Right cardiac atrium (tissue), 5 donors: ENCODE measurements at regions of chr1 and their contacts with region 1.

Region 1: GRCh38 chr1:11805447-11806306 is at the starts of genes CLCN6 and MTHFR:
- DNase-seq: peak; percentile 100
- ATAC-seq: peak; percentile 90 to 92
- H3K4me3 ChIP-seq: peak within 1 kb of the TSS; percentile 80
- H3K27ac ChIP-seq: peak within 1 kb of the TSS; percentile 94
- H3K4me1 ChIP-seq: peaks cover 7% of the 10 kb centered on the region
- H3K27me3 ChIP-seq: no peaks in the 10 kb centered on the region
- total RNA-seq, gene CLCN6: 30.4 to 54.9 (median 36.8) TPM
- total RNA-seq, gene MTHFR: 46.6 to 75.2 (median 58.9) TPM

Region 2: GRCh38 chr1:11725616-11726015 is 80.1 kb before region 1 on chr1:
- intact Hi-C with region 1: no loop called
- DNase-seq: no peak
- ATAC-seq: no peak
- H3K4me3 ChIP-seq: no peak overlapping the region
- H3K27ac ChIP-seq: no peak overlapping the region
- H3K4me1 ChIP-seq: no peaks in the 10 kb centered on the region
- H3K27me3 ChIP-seq: no peaks in the 10 kb centered on the region

Region 3: GRCh38 chr1:11735854-11736745 is 69.6 kb before region 1 on chr1 and contains the start of gene AGTRAP:
- intact Hi-C with region 1: loop called in 1 of 4 experiments (anchors 2 kb)
- DNase-seq: peak; percentile 98 to 100 (median 99)
- ATAC-seq: peak; percentile 92
- H3K4me3 ChIP-seq: peak within 1 kb of the TSS; percentile 67
- H3K27ac ChIP-seq: peak within 1 kb of the TSS; percentile 78
- H3K4me1 ChIP-seq: peaks cover 4% of the 10 kb centered on the region
- H3K27me3 ChIP-seq: no peaks in the 10 kb centered on the region
- total RNA-seq, gene AGTRAP: 17.5 to 25.0 (median 21.9) TPM

Region 4: DNA sequence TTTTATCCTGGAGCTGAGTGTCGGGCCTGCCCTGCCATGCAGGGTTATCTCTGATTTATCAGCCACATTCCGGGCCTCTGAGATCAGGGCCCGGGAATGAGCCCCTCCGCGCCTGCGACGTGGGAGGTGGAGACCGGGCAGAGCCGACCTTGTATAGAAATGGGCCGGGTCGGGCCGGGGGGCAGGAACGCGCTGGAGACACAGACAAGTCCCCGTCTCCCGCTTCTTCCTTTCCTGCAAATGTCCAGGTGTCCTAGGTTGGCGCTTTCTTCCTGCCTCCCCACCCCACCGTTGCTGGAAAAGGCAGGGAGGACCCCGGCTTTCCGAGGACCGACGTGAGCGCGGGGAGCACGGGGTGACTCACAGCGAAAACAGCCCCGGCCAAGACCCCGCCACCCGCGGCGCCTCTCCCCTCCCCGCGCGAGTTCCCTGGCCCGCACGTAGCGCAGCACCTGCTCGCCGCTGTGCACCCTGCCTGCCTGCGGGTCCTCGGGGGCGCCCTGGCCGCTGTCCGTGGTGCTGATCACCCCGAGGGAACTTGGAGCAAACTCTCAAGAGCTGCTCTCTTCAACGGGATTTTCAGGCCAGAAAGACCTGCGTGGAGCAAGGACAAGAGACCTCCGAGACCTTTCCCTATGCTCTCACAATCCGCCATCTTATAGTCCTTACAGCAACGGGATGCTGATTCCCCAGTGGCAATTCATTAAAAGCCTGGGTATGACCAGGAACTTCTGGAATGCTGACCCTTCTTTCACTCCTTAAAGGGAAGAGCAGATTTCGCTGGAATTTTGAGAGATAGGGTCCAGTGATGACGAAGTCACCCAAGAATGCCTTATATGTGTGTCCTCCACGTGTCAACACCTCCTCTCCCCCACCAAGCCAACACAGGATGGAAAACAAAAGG is 53.5 kb after region 1 on chr1:
- intact Hi-C with region 1: no loop called
- DNase-seq: peak; percentile 76 to 90 (median 89)
- ATAC-seq: peak; percentile 68 to 78
- H3K4me3 ChIP-seq: no peak overlapping the region
- H3K27ac ChIP-seq: no peak overlapping the region
- H3K4me1 ChIP-seq: no peaks in the 10 kb centered on the region
- H3K27me3 ChIP-seq: no peaks in the 10 kb centered on the region